Posterior vena cava (tissue), 2 donors: ENCODE measurements at regions of chr11 and their contacts with region 1.

Region 1: GRCh38 chr11:1917671-1918516 is 1.6 kb upstream of the TNNT3 start:
- DNase-seq: peak; percentile 83

Region 2: DNA sequence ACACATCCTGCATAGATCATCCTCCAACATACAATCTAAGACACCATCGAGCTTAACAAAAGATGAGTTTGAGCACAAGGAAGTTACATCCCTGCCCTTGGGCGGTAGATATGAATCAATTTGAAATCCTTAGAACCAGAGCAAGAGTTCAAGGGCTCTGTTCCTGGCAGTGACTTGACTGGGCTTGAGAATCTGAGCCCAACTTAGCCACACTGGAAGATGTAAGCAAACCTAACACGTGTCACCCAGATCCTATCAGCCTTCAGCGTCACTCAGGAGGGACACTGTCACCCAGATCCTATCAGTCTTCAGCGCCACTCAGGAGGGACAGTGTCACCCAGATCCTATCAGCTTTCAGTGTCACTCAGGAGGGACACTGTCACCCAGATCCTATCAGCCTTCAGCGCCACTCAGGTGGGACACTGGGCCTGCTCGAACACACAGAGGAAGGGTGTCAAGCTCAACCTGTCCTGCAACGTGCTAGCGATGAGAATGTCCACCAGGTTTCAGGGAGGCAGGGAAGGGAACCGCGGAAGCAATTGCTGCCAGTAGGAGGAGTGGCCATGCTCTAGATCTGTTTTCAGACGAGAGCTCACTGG is 121.4 kb before region 1 on chr11:
- intact Hi-C with region 1: no loop called
- DNase-seq: peak; percentile 35

Region 3: GRCh38 chr11:1882519-1883238 is 35.2 kb before region 1 on chr11:
- intact Hi-C with region 1: loop called in 1 of 2 experiments (anchors 5 kb)
- DNase-seq: peak; percentile 95

Region 4: GRCh38 chr11:1889224-1890120 is 28.4 kb before region 1 on chr11:
- intact Hi-C with region 1: loop called (anchors 1 kb)
- DNase-seq: peak; percentile 86

Region 5: GRCh38 chr11:1935156-1936071 is 17.5 kb after region 1 on chr11:
- intact Hi-C with region 1: loop called in 1 of 2 experiments (anchors 2 kb)
- DNase-seq: peak; percentile 79